Activated B cell treated with CpG ODN at 0.5 μM for 24 hours (primary cell): ENCODE measurements at regions of chr1 and their contacts with region 1.

Region 1: GRCh38 chr1:8560611-8561544 is 243.0 kb downstream of the SLC45A1 start:
- DNase-seq: no peak
- ATAC-seq: peak; percentile 89
- H3K4me3 Mint-ChIP-seq: peak overlapping the region; percentile 7
- H3K27ac Mint-ChIP-seq: peak overlapping the region; percentile 54
- H3K4me1 Mint-ChIP-seq: peaks cover 40% of the 10 kb centered on the region
- H3K27me3 Mint-ChIP-seq: no peaks in the 10 kb centered on the region
- CTCF ChIP-seq: peak; percentile 65

Region 2: DNA sequence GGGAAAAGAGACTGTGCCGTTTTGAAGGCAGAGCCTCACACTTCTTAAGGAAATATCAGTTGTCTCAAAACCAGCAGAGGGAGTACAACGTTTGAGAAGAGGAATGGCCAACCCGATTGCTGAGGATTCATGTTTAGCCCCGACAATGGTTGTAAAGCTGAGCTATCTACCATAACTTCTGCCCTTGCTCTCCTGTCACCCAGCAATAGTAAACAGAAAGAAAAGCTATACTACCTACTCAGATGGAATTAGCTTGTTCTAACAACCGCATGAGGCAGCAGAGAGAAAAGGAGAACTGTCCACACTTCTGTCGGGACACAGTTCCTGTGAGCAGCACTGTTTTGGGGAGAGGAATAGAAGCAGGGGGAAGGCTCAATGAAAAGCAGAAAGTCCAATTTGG is 151.8 kb before region 1 on chr1:
- CTCF ChIA-PET with region 1: interaction called, 15 read pairs
- POLR2A ChIA-PET with region 1: no interaction called
- intact Hi-C with region 1: no loop called
- DNase-seq: no peak
- ATAC-seq: peak; percentile 78
- H3K4me3 Mint-ChIP-seq: peak overlapping the region; percentile 0
- H3K27ac Mint-ChIP-seq: peak overlapping the region; percentile 54
- H3K4me1 Mint-ChIP-seq: peaks cover 44% of the 10 kb centered on the region
- H3K27me3 Mint-ChIP-seq: no peaks in the 10 kb centered on the region
- CTCF ChIP-seq: no peak

Region 3: GRCh38 chr1:8463144-8463927 is 97.5 kb before region 1 on chr1:
- CTCF ChIA-PET with region 1: no interaction called
- POLR2A ChIA-PET with region 1: no interaction called
- intact Hi-C with region 1: no loop called
- DNase-seq: no peak
- ATAC-seq: no peak
- H3K4me3 Mint-ChIP-seq: no peak overlapping the region
- H3K27ac Mint-ChIP-seq: peak overlapping the region; percentile 27
- H3K4me1 Mint-ChIP-seq: peaks cover 60% of the 10 kb centered on the region
- H3K27me3 Mint-ChIP-seq: no peaks in the 10 kb centered on the region
- CTCF ChIP-seq: no peak

Region 4: GRCh38 chr1:8604041-8604945 is 43.4 kb after region 1 on chr1:
- CTCF ChIA-PET with region 1: interaction called, 6 read pairs
- POLR2A ChIA-PET with region 1: interaction called, 3 read pairs
- intact Hi-C with region 1: loop called (anchors 2 kb)
- DNase-seq: no peak
- ATAC-seq: peak; percentile 85
- H3K4me3 Mint-ChIP-seq: peak overlapping the region; percentile 82
- H3K27ac Mint-ChIP-seq: peak overlapping the region; percentile 93
- H3K4me1 Mint-ChIP-seq: peaks cover 41% of the 10 kb centered on the region
- H3K27me3 Mint-ChIP-seq: no peaks in the 10 kb centered on the region
- CTCF ChIP-seq: no peak

Region 5: DNA sequence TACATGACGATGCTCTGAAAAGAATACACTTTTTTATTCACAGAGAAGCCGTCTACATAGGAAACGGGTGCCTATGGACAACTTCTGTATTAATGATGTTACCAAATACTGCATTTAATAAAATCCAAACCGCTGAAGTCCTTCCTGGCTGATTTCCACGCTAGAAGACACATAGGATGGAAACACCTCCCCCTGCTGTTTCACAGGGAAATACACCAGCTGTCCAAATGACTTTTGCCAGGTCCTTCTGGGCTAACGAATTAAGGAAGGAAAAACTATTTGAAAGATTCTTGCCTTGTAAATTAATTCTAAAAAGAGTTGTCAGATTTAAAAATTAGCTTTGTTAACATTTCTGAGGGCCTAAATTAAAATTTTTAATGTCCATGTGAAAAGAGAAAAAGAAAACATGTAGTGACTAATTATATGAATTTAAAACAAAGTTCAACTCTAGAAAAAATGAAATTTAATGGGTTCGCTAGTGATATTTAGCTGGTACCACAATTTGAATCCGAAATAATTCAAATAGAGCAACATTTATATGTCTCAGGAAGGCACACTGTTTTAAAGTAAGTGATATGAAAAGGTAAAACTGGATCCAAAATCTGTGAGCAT is 110.5 kb after region 1 on chr1:
- CTCF ChIA-PET with region 1: interaction called, 142 read pairs
- POLR2A ChIA-PET with region 1: interaction called, 3 read pairs
- intact Hi-C with region 1: loop called (anchors 1 kb)
- DNase-seq: no peak
- ATAC-seq: peak; percentile 49
- H3K4me3 Mint-ChIP-seq: peak overlapping the region; percentile 12
- H3K27ac Mint-ChIP-seq: no peak overlapping the region
- H3K4me1 Mint-ChIP-seq: peaks cover 52% of the 10 kb centered on the region
- H3K27me3 Mint-ChIP-seq: no peaks in the 10 kb centered on the region
- CTCF ChIP-seq: no peak

Region 6: GRCh38 chr1:8727809-8728213 is 166.9 kb after region 1 on chr1:
- CTCF ChIA-PET with region 1: interaction called, 180 read pairs
- POLR2A ChIA-PET with region 1: interaction called, 3 read pairs
- intact Hi-C with region 1: loop called (anchors 1 kb)
- DNase-seq: no peak
- ATAC-seq: no peak
- H3K4me3 Mint-ChIP-seq: no peak overlapping the region
- H3K27ac Mint-ChIP-seq: no peak overlapping the region
- H3K4me1 Mint-ChIP-seq: peaks cover 18% of the 10 kb centered on the region
- H3K27me3 Mint-ChIP-seq: no peaks in the 10 kb centered on the region
- CTCF ChIP-seq: no peak

Region 7: GRCh38 chr1:9004700-9005394 is 444.0 kb after region 1 on chr1:
- CTCF ChIA-PET with region 1: no interaction called
- POLR2A ChIA-PET with region 1: no interaction called
- intact Hi-C with region 1: no loop called
- DNase-seq: peak; percentile 74
- ATAC-seq: peak; percentile 75
- H3K4me3 Mint-ChIP-seq: no peak overlapping the region
- H3K27ac Mint-ChIP-seq: no peak overlapping the region
- H3K4me1 Mint-ChIP-seq: peaks cover 34% of the 10 kb centered on the region
- H3K27me3 Mint-ChIP-seq: peaks cover 2% of the 10 kb centered on the region
- CTCF ChIP-seq: peak; percentile 78